ENCODE measurements at regions of chr17 and their contacts with region 1.

Region 1: DNA sequence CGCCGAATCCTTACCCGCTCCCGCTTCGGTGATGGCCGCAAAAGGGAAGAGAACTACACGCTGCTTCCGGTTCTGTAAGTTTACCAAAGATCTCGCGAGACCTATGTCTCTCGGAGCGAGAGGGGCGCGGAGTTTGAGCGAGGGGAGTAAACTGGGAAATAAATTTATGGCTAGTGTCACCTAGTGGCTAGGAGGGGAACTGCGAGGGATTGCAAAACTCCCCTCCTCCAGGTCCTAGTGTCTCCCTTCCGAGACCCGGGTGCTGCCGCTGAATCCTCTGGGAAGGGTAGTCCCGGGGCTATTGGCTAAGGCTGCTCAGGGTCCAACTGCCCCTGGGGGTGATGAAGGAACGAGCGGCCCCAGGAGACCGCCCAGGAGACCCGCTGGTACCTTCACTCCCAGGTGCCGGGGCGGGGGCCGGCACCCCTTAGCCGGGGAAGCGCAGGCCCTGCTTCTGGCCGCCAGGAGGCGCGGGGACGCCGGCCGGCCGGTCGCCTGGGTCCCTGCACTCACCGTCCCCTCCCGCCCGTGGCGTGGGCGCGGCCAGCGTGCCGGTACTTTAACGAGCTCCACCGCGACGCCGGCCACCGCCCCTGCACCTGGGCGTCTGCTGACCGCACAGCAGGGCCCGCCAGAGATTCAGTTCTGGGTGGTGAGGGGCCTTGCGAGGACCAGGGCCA is at the start of gene RPL26:
- DNase-seq: peak; percentile 89 to 97 (median 97)
- ATAC-seq: peak; percentile 94
- H3K4me3 ChIP-seq: peak within 1 kb of the TSS; percentile 83
- H3K4me3 Mint-ChIP-seq: peak within 1 kb of the TSS; percentile 93 to 99 (median 97)
- H3K27ac ChIP-seq: peak within 1 kb of the TSS; percentile 82
- H3K27ac Mint-ChIP-seq: peak within 1 kb of the TSS; percentile 93 to 98 (median 96)
- H3K4me1 ChIP-seq: peaks cover 28 to 40% of the 10 kb centered on the region in 2 donors
- H3K4me1 Mint-ChIP-seq: peaks cover 34 to 76% (median 60%) of the 10 kb centered on the region in 7 donors
- H3K27me3 ChIP-seq: no peaks in the 10 kb centered on the region
- H3K27me3 Mint-ChIP-seq: peaks cover 0 to 2% (median 0%) of the 10 kb centered on the region in 5 donors
- total RNA-seq, gene RPL26: 2,029 to 3,298 (median 3,039) TPM

Region 2: GRCh38 chr17:6640536-6641373 is 1742.5 kb before region 1 on chr17 and contains the starts of genes KIAA0753 and TXNDC17:
- CTCF ChIA-PET with region 1: no interaction called
- POLR2A ChIA-PET with region 1: no interaction called
- intact Hi-C with region 1: loop called in 1 of 2 experiments (anchors 5 kb)
- DNase-seq: peak; percentile 75 to 97 (median 85)
- ATAC-seq: peak; percentile 94
- H3K4me3 ChIP-seq: peak within 1 kb of the TSS; percentile 91
- H3K4me3 Mint-ChIP-seq: peak within 1 kb of the TSS; percentile 90 to 98 (median 96)
- H3K27ac ChIP-seq: peak within 1 kb of the TSS; percentile 86
- H3K27ac Mint-ChIP-seq: peak within 1 kb of the TSS; percentile 88 to 99 (median 97)
- H3K4me1 ChIP-seq: peaks cover 17 to 24% of the 10 kb centered on the region in 2 donors
- H3K4me1 Mint-ChIP-seq: peaks cover 35 to 64% (median 48%) of the 10 kb centered on the region in 7 donors
- H3K27me3 ChIP-seq: no peaks in the 10 kb centered on the region
- H3K27me3 Mint-ChIP-seq: no peaks in the 10 kb centered on the region
- total RNA-seq, gene KIAA0753: 12.4 to 18.4 (median 17.9) TPM
- total RNA-seq, gene TXNDC17: 14.3 to 70.3 (median 18.5) TPM

Region 3: DNA sequence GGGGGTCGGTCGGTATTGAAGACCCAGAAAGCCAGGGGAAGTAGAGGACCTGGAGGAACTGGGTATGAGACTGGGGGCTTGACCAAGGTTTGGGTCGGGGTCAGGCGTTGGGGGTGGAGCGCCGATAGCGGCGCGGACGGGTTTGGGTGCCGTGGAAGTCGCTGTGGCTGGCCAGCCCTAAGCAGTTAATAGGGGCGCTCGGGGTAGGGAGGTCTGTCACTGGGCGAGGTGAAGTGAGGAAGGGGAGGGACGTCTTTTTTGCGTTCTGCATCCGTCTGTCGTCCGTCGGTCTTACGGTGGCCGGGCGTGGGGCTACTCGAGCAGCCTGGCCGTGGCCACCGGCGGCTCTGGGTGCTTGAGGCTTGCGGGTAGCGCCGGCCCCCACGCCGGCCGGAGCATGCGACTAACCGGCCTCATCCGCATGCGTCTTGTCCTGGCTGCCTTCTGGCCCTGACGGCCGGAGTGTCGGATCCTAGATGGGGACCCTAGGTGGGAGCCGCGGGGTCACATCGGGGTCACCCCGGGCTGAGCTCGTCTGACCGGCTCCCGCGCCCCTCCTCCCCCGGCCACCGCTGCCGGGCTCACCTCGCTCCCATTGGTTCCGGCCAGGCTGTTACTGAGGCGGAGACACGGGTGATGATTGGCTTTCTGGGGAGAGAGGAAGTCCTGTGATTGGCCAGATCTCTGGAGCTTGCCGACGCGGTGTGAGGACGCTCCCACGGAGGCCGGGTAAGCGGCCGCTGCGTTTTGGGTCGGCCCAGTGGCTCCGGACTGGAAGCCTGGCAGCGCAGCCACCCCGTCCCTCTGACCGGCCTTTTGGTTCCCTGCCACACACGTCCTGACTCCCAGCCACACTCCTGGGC is 538.8 kb before region 1 on chr17:
- CTCF ChIA-PET with region 1: no interaction called
- POLR2A ChIA-PET with region 1: no interaction called
- intact Hi-C with region 1: loop called (anchors 5 kb)
- DNase-seq: peak; percentile 74 to 87 (median 79)
- ATAC-seq: peak; percentile 42
- H3K4me3 ChIP-seq: peak overlapping the region; percentile 84
- H3K4me3 Mint-ChIP-seq: peak overlapping the region; percentile 85 to 99 (median 94)
- H3K27ac ChIP-seq: peak overlapping the region; percentile 100
- H3K27ac Mint-ChIP-seq: peak overlapping the region; percentile 90 to 100 (median 99)
- H3K4me1 ChIP-seq: peaks cover 11 to 26% of the 10 kb centered on the region in 2 donors
- H3K4me1 Mint-ChIP-seq: peaks cover 19 to 41% (median 29%) of the 10 kb centered on the region in 7 donors
- H3K27me3 ChIP-seq: no peaks in the 10 kb centered on the region
- H3K27me3 Mint-ChIP-seq: peaks cover 0 to 2% (median 0%) of the 10 kb centered on the region in 5 donors

Region 4: DNA sequence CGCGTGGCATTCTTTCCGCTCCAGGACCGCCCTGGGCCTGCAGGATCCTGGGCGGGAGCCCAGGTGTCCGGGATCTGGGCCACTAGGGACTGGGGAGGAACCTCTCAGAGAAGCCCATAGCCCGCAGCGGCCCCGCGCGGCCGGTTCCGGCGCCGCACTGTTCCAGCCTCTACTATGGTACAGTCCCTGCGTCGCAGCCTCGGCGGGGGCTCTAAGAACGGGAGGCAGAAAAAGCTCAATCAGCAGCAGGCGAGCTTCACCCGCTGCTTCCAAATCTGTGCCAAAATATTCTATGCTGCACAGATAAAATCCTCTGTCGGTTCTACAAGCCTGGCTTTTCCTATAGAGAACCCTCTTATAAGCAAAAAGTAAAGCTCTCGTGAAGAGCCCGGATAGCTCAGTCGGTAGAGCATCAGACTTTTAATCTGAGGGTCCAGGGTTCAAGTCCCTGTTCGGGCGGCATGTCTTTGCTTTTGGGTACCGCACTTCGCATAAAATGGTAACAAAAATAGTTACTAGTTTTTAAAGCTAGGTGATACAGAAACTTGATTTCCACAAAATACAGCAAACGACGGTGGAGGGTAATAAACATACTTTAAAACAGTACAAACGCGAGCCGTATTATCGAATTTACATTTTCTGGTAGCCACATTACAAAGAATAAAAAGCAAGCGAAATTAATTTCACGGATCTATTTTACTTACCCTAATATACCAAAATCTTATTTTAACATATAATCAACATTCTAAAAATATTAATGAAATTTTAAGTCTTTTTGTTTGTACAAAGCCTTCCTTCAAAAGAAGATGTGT is 264.3 kb before region 1 on chr17:
- CTCF ChIA-PET with region 1: no interaction called
- POLR2A ChIA-PET with region 1: no interaction called
- intact Hi-C with region 1: loop called in 1 of 2 experiments (anchors 2 kb)
- DNase-seq: peak; percentile 78 to 92 (median 90)
- ATAC-seq: peak; percentile 76
- H3K4me3 ChIP-seq: peak overlapping the region; percentile 95
- H3K4me3 Mint-ChIP-seq: peak overlapping the region; percentile 88 to 99 (median 94)
- H3K27ac ChIP-seq: peak overlapping the region; percentile 64
- H3K27ac Mint-ChIP-seq: peak overlapping the region; percentile 94 to 100 (median 99)
- H3K4me1 ChIP-seq: peaks cover 44 to 46% of the 10 kb centered on the region in 2 donors
- H3K4me1 Mint-ChIP-seq: peaks cover 27 to 61% (median 53%) of the 10 kb centered on the region in 7 donors
- H3K27me3 ChIP-seq: peaks cover 0 to 12% of the 10 kb centered on the region in 2 donors
- H3K27me3 Mint-ChIP-seq: peaks cover 9 to 77% (median 45%) of the 10 kb centered on the region in 5 donors

Region 5: GRCh38 chr17:8222630-8223356 is 160.5 kb before region 1 on chr17:
- CTCF ChIA-PET with region 1: no interaction called
- POLR2A ChIA-PET with region 1: no interaction called
- intact Hi-C with region 1: loop called in 1 of 2 experiments (anchors 10 kb)
- DNase-seq: peak; percentile 88 to 92 (median 91)
- ATAC-seq: peak; percentile 66
- H3K4me3 ChIP-seq: peak overlapping the region; percentile 99
- H3K4me3 Mint-ChIP-seq: peak overlapping the region; percentile 86 to 99 (median 92)
- H3K27ac ChIP-seq: peak overlapping the region; percentile 83
- H3K27ac Mint-ChIP-seq: peak overlapping the region; percentile 95 to 100 (median 99)
- H3K4me1 ChIP-seq: peaks cover 23 to 26% of the 10 kb centered on the region in 2 donors
- H3K4me1 Mint-ChIP-seq: peaks cover 30 to 81% (median 70%) of the 10 kb centered on the region in 7 donors
- H3K27me3 ChIP-seq: no peaks in the 10 kb centered on the region
- H3K27me3 Mint-ChIP-seq: peaks cover 0 to 17% (median 0%) of the 10 kb centered on the region in 5 donors

Region 6: GRCh38 chr17:8409966-8410864 is 26.9 kb after region 1 on chr17:
- CTCF ChIA-PET with region 1: no interaction called
- POLR2A ChIA-PET with region 1: interaction called, 3 read pairs
- intact Hi-C with region 1: loop called in 1 of 2 experiments (anchors 1 kb)
- DNase-seq: peak; percentile 56 to 81 (median 70)
- ATAC-seq: peak; percentile 84
- H3K4me3 ChIP-seq: no peak overlapping the region
- H3K4me3 Mint-ChIP-seq: peak overlapping the region in 1 of 10 donors; percentile 48
- H3K27ac ChIP-seq: no peak overlapping the region
- H3K27ac Mint-ChIP-seq: no peak overlapping the region
- H3K4me1 ChIP-seq: peaks cover 0 to 3% of the 10 kb centered on the region in 2 donors
- H3K4me1 Mint-ChIP-seq: peaks cover 9 to 26% (median 15%) of the 10 kb centered on the region in 7 donors
- H3K27me3 ChIP-seq: no peaks in the 10 kb centered on the region
- H3K27me3 Mint-ChIP-seq: peaks cover 0 to 37% (median 8%) of the 10 kb centered on the region in 5 donors

Region 7: GRCh38 chr17:8785547-8786413 is 402.5 kb after region 1 on chr17:
- CTCF ChIA-PET with region 1: no interaction called
- POLR2A ChIA-PET with region 1: no interaction called
- intact Hi-C with region 1: loop called in 1 of 2 experiments (anchors 1 kb)
- DNase-seq: peak; percentile 18 to 60 (median 45)
- ATAC-seq: peak; percentile 62
- H3K4me3 ChIP-seq: no peak overlapping the region
- H3K4me3 Mint-ChIP-seq: no peak overlapping the region
- H3K27ac ChIP-seq: no peak overlapping the region
- H3K27ac Mint-ChIP-seq: no peak overlapping the region
- H3K4me1 ChIP-seq: no peaks in the 10 kb centered on the region
- H3K4me1 Mint-ChIP-seq: peaks cover 0 to 4% (median 0%) of the 10 kb centered on the region in 7 donors
- H3K27me3 ChIP-seq: no peaks in the 10 kb centered on the region
- H3K27me3 Mint-ChIP-seq: peaks cover 0 to 18% (median 0%) of the 10 kb centered on the region in 5 donors

Region 8: DNA sequence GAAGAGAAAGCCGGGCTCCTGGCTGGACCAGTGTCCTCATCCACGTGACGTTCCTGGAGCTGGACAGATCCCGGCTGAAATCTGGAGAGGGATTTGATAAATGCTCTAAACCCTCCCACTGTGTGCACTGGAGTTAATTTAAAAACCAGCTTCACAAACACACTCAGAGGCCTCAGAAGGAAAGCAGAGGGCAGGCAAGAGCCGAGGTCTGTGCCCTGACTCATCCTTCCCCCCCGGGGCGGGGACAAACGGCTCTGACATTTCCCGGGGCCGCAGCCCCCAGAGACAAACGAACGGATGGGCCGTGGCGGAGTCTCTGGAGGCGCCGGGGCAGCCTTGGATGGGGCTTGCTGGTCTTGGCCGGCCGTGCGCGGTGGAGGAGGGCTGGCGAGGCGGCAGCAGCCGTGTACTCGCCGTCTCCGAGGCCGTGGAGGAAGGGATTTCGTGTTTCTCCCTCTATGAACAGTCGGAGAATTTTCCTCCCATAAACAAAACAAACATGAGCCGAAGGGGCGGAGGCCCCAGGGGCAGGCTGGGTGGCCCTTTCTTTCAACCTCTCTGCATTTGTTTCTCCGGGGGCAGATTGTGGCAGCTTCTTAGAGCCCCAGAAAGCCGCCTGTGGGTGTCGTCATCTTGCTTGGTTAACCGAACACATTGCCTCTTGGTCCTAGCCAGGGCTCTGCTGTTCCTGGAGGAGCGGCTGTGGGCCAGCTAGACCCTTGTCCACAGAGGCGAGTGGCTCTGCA is 732.3 kb after region 1 on chr17:
- CTCF ChIA-PET with region 1: no interaction called
- POLR2A ChIA-PET with region 1: no interaction called
- intact Hi-C with region 1: no loop called
- DNase-seq: peak in 6 of 9 donors; percentile 9 to 56 (median 20)
- ATAC-seq: peak; percentile 63
- H3K4me3 ChIP-seq: peak overlapping the region; percentile 13
- H3K4me3 Mint-ChIP-seq: peak overlapping the region in 9 of 10 donors; percentile 55 to 78 (median 69)
- H3K27ac ChIP-seq: no peak overlapping the region
- H3K27ac Mint-ChIP-seq: peak overlapping the region in 3 of 9 donors; percentile 13 to 34 (median 31)
- H3K4me1 ChIP-seq: no peaks in the 10 kb centered on the region
- H3K4me1 Mint-ChIP-seq: peaks cover 0 to 9% (median 8%) of the 10 kb centered on the region in 7 donors
- H3K27me3 ChIP-seq: no peaks in the 10 kb centered on the region
- H3K27me3 Mint-ChIP-seq: peaks cover 0 to 10% (median 7%) of the 10 kb centered on the region in 5 donors

Measured in naive thymus-derived CD4-positive, alpha-beta T cell (primary cell).